ENCODE measurements at regions of chr1 and their contacts with region 1.

Region 1: DNA sequence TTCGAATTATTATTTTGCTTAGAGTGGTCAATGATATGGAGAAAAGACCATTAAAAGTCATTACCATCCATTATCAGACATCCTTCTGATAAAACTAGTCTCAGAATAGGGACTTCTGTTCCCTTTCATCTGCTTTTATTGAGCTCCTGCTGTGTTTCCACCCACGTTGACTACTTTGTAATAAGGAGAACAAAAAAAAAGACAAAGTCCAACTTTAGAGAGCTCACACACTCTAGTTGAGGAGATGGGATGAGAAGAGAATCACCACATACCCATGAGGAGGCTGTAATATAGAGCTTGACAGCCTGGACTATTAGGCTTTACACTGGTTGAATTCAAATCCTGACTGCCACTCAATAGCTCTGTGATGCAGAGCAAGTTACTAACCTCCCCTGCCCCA is 27.8 kb upstream of the ALDH9A1 start:
- DNase-seq: no peak
- ATAC-seq: no peak
- H3K4me3 ChIP-seq: no peak overlapping the region
- H3K4me3 Mint-ChIP-seq: no peak overlapping the region
- H3K27ac ChIP-seq: no peak overlapping the region
- H3K27ac Mint-ChIP-seq: no peak overlapping the region
- H3K4me1 ChIP-seq: no peaks in the 10 kb centered on the region
- H3K4me1 Mint-ChIP-seq: no peaks in the 10 kb centered on the region
- H3K27me3 ChIP-seq: no peaks in the 10 kb centered on the region
- H3K27me3 Mint-ChIP-seq: no peaks in the 10 kb centered on the region
- CTCF ChIP-seq: no peak

Region 2: GRCh38 chr1:165686121-165686970 is 39.8 kb before region 1 on chr1:
- CTCF ChIA-PET with region 1: no interaction called
- POLR2A ChIA-PET with region 1: no interaction called
- intact Hi-C with region 1: loop called in 1 of 2 experiments (anchors 5 kb)
- DNase-seq: peak in 2 of 9 experiments; percentile 35 to 37
- ATAC-seq: peak; percentile 36
- H3K4me3 ChIP-seq: no peak overlapping the region
- H3K4me3 Mint-ChIP-seq: no peak overlapping the region
- H3K27ac ChIP-seq: peak overlapping the region in 1 of 2 experiments; percentile 38
- H3K27ac Mint-ChIP-seq: peak overlapping the region; percentile 74
- H3K4me1 ChIP-seq: peaks cover 14% of the 10 kb centered on the region
- H3K4me1 Mint-ChIP-seq: peaks cover 46% of the 10 kb centered on the region
- H3K27me3 ChIP-seq: no peaks in the 10 kb centered on the region
- H3K27me3 Mint-ChIP-seq: no peaks in the 10 kb centered on the region
- CTCF ChIP-seq: no peak